ENCODE measurements at regions of chr2 and their contacts with region 1.

Region 1: GRCh38 chr2:1793001-1793867 is 48.9 kb upstream of the PXDN start:
- DNase-seq: no peak
- ATAC-seq: 0 out of 2 replicates have a peak, but pooled peaks have one; percentile 34
- H3K4me3 ChIP-seq: no peak overlapping the region
- H3K27ac ChIP-seq: no peak overlapping the region
- H3K4me1 ChIP-seq: peaks cover 10% of the 10 kb centered on the region
- H3K27me3 ChIP-seq: no peaks in the 10 kb centered on the region
- CTCF ChIP-seq: no peak

Region 2: DNA sequence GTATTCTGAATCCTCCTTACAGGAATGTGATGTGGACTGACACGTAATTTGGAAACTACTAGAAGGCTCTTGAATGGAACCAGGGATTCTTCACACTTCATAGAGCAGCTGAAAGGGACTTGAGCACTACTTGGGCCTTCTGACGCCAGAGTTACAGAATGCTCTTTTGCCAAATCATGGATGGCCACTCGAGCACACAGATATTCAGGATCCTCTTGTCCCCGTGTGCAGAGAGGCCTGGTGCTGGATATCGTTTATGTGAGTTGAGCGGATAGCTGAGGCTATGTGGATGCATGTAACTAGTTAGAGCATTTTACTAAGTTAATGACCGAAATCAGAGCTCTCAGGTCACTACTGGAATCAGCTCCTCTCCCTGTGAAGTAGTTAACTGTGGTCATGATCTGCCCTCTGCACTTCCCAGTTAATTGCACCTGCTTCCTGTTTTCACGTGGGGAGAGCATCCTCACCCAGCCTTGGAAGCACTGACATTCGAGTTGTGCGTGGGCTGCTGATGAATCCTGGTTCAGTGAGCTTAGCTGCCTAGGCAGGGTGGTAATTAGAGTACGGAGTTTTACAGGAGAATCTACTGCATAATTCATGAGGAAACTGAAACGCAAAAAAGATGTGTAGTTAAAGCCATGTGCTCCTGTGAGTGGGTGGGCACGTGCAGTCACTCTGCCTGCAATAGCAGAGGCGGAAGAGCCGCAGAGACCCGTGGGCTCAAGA is 385.1 kb before region 1 on chr2:
- CTCF ChIA-PET with region 1: no interaction called
- POLR2A ChIA-PET with region 1: no interaction called
- in situ Hi-C with region 1: no loop called
- intact Hi-C with region 1: no loop called
- DNase-seq: no peak
- ATAC-seq: no peak
- H3K4me3 ChIP-seq: no peak overlapping the region
- H3K27ac ChIP-seq: no peak overlapping the region
- H3K4me1 ChIP-seq: no peaks in the 10 kb centered on the region
- H3K27me3 ChIP-seq: no peaks in the 10 kb centered on the region; the same call in 1 of the 2 replicates
- CTCF ChIP-seq: no peak

Region 3: GRCh38 chr2:1673160-1673944 is 119.9 kb before region 1 on chr2:
- CTCF ChIA-PET with region 1: interaction called, 10 read pairs
- POLR2A ChIA-PET with region 1: no interaction called
- in situ Hi-C with region 1: no loop called
- intact Hi-C with region 1: no loop called
- DNase-seq: no peak
- ATAC-seq: no peak
- H3K4me3 ChIP-seq: no peak overlapping the region
- H3K27ac ChIP-seq: peak overlapping the region; percentile 57; the same call in 1 of the 2 replicates
- H3K4me1 ChIP-seq: peaks cover 11% of the 10 kb centered on the region
- H3K27me3 ChIP-seq: no peaks in the 10 kb centered on the region
- CTCF ChIP-seq: no peak

Region 4: GRCh38 chr2:3154146-3154545 is 1360.9 kb after region 1 on chr2:
- CTCF ChIA-PET with region 1: no interaction called
- POLR2A ChIA-PET with region 1: interaction called, 15 read pairs
- in situ Hi-C with region 1: no loop called
- intact Hi-C with region 1: no loop called
- DNase-seq: no peak
- ATAC-seq: no peak
- H3K4me3 ChIP-seq: no peak overlapping the region
- H3K27ac ChIP-seq: no peak overlapping the region
- H3K4me1 ChIP-seq: no peaks in the 10 kb centered on the region
- H3K27me3 ChIP-seq: no peaks in the 10 kb centered on the region
- CTCF ChIP-seq: no peak

Measured in Panc1 (cell line).